AG04450 (cell line): ENCODE measurements at regions of chr11 and their contacts with region 1.

Region 1: GRCh38 chr11:8566613-8567210 is 27.3 kb downstream of the STK33 start:
- DNase-seq: no peak
- H3K4me3 ChIP-seq: no peak overlapping the region
- H3K27ac ChIP-seq: no peak overlapping the region
- H3K27me3 ChIP-seq: no peaks in the 10 kb centered on the region
- CTCF ChIP-seq: peak; percentile 64

Region 2: DNA sequence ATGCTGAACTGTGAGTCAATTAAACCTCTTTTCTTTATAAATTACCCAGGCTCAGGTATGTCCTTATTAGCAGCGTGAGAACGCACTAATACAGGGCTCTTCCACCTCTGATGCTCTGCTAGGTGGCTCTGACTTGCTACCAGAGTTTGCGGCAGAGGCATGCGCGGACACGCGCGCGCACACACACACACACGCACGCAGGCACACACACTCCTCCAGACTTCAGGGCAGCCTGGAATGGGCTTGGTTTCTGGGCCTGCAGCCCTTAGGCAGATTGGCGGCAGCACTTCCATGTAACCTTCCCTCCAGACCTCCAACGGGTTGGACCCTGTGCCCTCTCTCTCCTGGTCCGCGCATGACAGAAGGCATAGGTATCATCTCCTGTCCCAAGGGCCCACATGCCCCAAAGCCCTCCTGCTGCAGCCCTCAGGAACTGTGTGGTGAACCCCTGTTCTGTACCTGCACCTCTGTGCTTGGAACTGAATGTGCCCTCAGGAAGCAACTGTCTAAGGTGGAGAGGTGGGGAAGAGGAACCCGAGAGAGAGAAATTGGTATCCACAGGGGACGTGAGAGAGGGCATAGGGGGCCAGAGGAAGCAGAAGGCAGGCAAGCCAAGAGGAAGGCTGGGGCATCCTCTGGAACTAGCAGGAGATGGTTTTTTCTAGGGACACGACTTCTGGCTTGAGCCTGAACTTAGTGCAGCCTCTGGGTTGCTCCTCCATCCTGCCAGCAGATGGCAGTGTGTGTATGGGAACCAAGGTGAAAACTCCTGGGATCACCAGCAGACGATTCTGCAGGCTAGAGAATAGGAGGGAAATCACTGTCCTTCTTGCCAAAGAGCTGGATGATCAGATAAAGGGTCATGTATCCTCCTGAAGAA is 374.5 kb before region 1 on chr11:
- CTCF ChIA-PET with region 1: interaction called, 69 read pairs
- POLR2A ChIA-PET with region 1: no interaction called
- DNase-seq: peak; percentile 32
- H3K4me3 ChIP-seq: no peak overlapping the region
- H3K27ac ChIP-seq: no peak overlapping the region
- H3K27me3 ChIP-seq: peaks cover 9% of the 10 kb centered on the region
- CTCF ChIP-seq: peak; percentile 91

Region 3: GRCh38 chr11:8225589-8226036 is 341.1 kb before region 1 on chr11:
- CTCF ChIA-PET with region 1: interaction called, 69 read pairs
- POLR2A ChIA-PET with region 1: no interaction called
- DNase-seq: peak; percentile 29
- H3K4me3 ChIP-seq: no peak overlapping the region
- H3K27ac ChIP-seq: no peak overlapping the region
- H3K27me3 ChIP-seq: peaks cover 12% of the 10 kb centered on the region
- CTCF ChIP-seq: peak; percentile 87

Region 4: GRCh38 chr11:8338138-8338537 is 228.6 kb before region 1 on chr11:
- CTCF ChIA-PET with region 1: interaction called, 11 read pairs
- POLR2A ChIA-PET with region 1: no interaction called
- DNase-seq: no peak
- H3K4me3 ChIP-seq: no peak overlapping the region
- H3K27ac ChIP-seq: no peak overlapping the region
- H3K27me3 ChIP-seq: peaks cover 5% of the 10 kb centered on the region
- CTCF ChIP-seq: peak; percentile 64

Region 5: GRCh38 chr11:8577791-8578581 is 11.3 kb after region 1 on chr11:
- CTCF ChIA-PET with region 1: interaction called, 13 read pairs
- POLR2A ChIA-PET with region 1: no interaction called
- DNase-seq: no peak
- H3K4me3 ChIP-seq: no peak overlapping the region
- H3K27ac ChIP-seq: no peak overlapping the region
- H3K27me3 ChIP-seq: no peaks in the 10 kb centered on the region
- CTCF ChIP-seq: no peak